HEK293 (cell line): ENCODE measurements at regions of chr19 and their contacts with region 1.

Region 1: GRCh38 chr19:50922317-50922853 is 11.2 kb upstream of the KLK4 start:
- H3K4me3 ChIP-seq: no peak overlapping the region
- H3K27ac ChIP-seq: no peak overlapping the region
- H3K4me1 ChIP-seq: peaks cover 3% of the 10 kb centered on the region
- CTCF ChIP-seq: peak; percentile 84

Region 2: DNA sequence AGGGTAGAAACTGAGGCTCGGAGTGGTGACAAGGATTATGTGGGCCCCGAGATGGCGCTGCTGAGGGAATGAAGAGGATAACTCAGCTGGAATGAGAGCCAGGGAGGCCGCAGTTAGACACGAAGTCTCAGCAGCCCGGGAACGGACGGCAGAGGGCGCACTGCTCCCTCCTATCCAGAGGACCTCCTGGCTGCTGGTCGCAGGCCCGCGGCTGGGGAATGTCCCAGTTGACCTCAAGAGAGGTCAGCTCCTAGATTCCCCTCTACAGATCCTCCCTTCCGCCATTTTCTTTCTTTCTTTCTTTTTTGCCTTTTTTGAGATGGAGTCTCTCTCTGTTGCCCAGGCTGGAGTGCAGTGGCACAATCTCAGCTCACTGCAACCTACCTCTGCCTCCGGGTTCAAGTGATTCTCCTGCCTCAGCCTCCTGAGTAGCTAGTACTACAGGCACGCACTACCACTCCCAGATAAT is 384.6 kb before region 1 on chr19:
- CTCF ChIA-PET with region 1: interaction called, 31 read pairs
- POLR2A ChIA-PET with region 1: no interaction called
- H3K4me3 ChIP-seq: no peak overlapping the region
- H3K27ac ChIP-seq: no peak overlapping the region
- H3K4me1 ChIP-seq: no peaks in the 10 kb centered on the region
- CTCF ChIP-seq: peak; percentile 91

Region 3: DNA sequence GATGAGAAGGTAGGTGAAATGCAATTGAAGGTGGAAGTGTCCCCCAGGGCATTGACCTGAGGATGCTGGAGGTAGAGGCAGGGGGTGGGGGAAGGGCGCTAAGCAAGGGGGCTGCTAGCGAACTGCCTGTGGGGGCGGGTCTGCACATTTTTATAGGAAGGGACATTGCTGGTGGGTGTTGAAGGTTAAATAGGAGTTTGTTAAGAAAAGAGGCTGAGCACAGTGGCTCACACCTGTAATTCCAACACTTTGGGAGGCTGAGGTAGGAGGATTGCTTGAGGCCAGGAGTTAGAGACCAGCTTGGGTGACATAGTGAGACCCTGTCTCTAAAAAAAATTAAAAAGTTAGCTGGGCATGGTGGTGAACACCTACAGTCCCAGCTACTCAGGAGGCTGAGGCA is 137.7 kb before region 1 on chr19:
- CTCF ChIA-PET with region 1: interaction called, 79 read pairs
- POLR2A ChIA-PET with region 1: no interaction called
- H3K4me3 ChIP-seq: no peak overlapping the region
- H3K27ac ChIP-seq: no peak overlapping the region
- H3K4me1 ChIP-seq: peaks cover 3% of the 10 kb centered on the region; the same call in 1 of the 2 replicates
- CTCF ChIP-seq: no peak

Region 4: GRCh38 chr19:50844296-50844935 is 78.0 kb before region 1 on chr19:
- CTCF ChIA-PET with region 1: interaction called, 13 read pairs
- POLR2A ChIA-PET with region 1: no interaction called
- H3K4me3 ChIP-seq: no peak overlapping the region
- H3K27ac ChIP-seq: no peak overlapping the region
- H3K4me1 ChIP-seq: peaks cover 15% of the 10 kb centered on the region
- CTCF ChIP-seq: no peak

Region 5: DNA sequence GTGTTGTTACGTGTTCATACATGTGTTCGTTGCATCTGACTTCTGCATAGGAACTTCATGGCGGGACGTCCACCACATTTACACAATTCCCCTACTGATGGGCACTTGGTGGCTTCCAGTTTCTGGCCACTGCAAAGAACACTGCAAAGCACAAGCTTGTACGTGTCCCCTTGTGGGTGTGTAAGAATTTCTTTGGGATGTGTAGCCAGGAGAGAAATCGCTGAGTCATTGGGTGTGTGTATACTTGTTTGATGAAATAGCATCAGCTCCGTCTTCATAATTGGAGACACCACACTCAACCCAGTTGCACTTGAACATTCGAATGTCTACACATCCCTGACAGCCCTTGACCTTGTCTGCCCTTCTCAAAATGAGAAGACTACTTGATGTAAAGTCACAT is 11.3 kb after region 1 on chr19:
- CTCF ChIA-PET with region 1: interaction called, 33 read pairs
- POLR2A ChIA-PET with region 1: no interaction called
- H3K4me3 ChIP-seq: no peak overlapping the region
- H3K27ac ChIP-seq: no peak overlapping the region
- H3K4me1 ChIP-seq: no peaks in the 10 kb centered on the region
- CTCF ChIP-seq: no peak

Region 6: GRCh38 chr19:51097166-51097738 is 174.9 kb after region 1 on chr19:
- CTCF ChIA-PET with region 1: interaction called, 27 read pairs
- POLR2A ChIA-PET with region 1: no interaction called
- H3K4me3 ChIP-seq: no peak overlapping the region
- H3K27ac ChIP-seq: no peak overlapping the region
- H3K4me1 ChIP-seq: peaks cover 13% of the 10 kb centered on the region
- CTCF ChIP-seq: peak; percentile 53